Dendritic cell treated with granulocyte-macrophage colony-stimulating factor and Interleukin-4, amounts not matched to agents 40 ng/mL and 50 ng/mL, for 4 days (primary cell): ENCODE measurements at regions of chr13 and their contacts with region 1.

Region 1: DNA sequence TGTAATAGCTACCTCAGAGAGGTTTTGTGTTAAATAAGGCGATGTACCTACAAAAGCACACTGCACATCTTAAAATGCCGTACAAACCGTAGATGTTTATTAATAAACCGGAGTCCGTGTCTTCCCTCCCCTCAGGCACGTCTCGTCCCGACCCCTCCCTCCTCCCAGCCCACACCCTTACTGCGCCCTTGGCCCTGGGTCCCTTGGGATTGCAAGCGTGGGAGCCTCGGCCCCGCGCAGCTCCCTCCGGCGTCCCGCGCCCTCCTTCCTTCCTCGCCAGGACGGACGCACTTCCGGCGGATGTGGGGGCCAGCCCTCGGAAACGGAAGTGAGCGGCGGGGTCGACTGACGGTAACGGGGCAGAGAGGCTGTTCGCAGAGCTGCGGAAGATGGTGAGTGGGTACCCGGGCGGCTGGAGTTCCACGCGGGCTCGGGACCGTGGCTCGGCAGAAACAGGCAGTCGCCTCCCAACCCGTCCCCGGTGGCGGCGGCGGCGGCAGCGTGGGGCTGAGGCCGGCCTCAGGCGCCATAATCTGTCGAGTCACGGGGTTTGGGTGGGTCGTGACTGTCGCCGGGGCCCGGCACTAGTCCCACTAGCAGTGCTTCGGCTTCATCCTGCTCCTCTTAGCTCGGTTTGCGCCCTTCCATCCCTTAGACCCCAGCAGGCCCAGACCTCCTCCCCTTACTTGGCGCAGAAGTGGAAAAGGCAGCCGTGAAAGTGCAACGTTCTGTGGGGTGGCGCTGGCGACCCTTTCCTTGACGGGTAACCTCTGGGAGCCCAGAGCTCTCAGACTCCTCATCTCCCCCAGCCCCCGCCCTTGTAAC is at the start of gene POMP:
- H3K4me3 Mint-ChIP-seq: peak within 1 kb of the TSS; percentile 91
- H3K27ac Mint-ChIP-seq: peak within 1 kb of the TSS; percentile 89
- H3K4me1 Mint-ChIP-seq: peaks cover 60% of the 10 kb centered on the region
- H3K27me3 Mint-ChIP-seq: no peaks in the 10 kb centered on the region

Region 2: DNA sequence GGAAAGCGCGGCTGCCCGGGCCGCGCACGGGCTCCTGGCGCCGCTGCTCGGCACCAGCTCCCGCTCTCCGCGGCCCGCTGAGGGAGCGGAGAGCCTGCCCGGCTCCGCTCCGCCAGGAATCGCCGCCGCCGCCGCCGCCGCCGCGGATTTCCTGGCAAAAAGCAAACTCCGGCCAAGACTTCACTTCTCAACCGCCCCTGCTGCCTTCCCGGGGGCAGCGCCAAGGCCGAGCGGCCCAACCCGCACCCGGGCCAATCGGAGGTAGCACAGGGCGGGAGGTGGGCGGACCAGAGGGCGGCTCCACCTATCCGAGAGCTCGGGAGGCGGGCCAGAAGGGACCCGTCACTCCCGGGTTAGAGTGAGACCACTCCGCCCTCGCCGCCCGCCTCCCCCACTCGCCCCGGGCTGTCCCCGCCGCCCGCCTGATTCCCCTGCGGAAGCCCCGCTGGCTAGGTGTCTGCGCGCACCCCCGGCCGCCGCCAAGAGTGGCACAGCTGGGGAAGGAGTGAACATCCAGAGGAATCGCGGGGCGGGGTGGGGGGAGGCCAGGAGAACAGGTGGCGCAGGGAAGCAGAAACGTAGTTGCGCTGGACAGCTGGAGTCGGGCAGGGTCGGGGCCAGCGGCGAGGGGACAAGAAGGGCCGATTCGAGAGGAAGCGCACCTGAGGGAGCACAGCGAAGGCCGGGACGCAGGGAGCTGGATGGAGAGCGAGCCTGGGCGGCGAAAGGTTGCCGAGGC is 1038.5 kb before region 1 on chr13 and contains the start of gene LNX2:
- intact Hi-C with region 1: loop called (anchors 5 kb)
- H3K4me3 Mint-ChIP-seq: peak within 1 kb of the TSS; percentile 86
- H3K27ac Mint-ChIP-seq: peak within 1 kb of the TSS; percentile 87
- H3K4me1 Mint-ChIP-seq: peaks cover 65% of the 10 kb centered on the region
- H3K27me3 Mint-ChIP-seq: no peaks in the 10 kb centered on the region

Region 3: DNA sequence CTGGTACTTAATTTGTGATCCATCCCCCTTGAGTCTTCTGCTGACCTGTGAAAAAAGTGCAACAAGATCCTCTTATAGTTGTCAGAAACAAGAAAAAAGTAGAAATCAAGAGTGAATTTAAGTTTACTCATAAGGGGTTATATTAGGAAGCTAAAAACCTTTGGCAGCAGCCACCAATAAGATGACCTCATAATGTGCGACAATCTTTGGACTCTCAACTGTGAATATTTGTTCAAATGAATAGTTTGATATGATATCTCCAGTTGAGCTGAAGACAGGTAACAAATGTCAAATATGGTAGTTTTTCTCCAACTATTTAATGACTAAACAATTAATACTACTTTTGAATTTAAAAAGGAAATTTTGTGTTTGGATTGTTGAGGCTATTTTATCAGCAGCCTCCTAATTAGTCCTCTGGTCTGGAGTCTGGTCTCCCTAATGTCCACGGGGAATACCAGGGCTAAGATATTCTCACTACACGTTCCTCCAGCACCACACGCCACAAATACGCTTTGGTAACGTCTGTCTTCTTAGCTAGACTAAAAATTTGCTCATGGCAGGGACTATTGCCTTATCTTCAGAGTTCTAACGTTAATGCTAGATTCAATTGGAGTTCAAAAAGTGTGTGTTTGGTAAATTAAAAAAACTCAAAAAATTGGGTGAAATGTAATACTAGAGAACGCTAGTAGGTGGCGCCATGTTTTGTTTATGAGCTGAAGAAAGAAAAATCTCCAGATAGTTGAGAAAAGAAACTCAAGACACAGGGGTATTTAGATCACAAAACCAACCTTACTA is 790.2 kb before region 1 on chr13:
- intact Hi-C with region 1: no loop called
- H3K4me3 Mint-ChIP-seq: no peak overlapping the region
- H3K27ac Mint-ChIP-seq: no peak overlapping the region
- H3K4me1 Mint-ChIP-seq: no peaks in the 10 kb centered on the region
- H3K27me3 Mint-ChIP-seq: peaks cover 34% of the 10 kb centered on the region

Region 4: DNA sequence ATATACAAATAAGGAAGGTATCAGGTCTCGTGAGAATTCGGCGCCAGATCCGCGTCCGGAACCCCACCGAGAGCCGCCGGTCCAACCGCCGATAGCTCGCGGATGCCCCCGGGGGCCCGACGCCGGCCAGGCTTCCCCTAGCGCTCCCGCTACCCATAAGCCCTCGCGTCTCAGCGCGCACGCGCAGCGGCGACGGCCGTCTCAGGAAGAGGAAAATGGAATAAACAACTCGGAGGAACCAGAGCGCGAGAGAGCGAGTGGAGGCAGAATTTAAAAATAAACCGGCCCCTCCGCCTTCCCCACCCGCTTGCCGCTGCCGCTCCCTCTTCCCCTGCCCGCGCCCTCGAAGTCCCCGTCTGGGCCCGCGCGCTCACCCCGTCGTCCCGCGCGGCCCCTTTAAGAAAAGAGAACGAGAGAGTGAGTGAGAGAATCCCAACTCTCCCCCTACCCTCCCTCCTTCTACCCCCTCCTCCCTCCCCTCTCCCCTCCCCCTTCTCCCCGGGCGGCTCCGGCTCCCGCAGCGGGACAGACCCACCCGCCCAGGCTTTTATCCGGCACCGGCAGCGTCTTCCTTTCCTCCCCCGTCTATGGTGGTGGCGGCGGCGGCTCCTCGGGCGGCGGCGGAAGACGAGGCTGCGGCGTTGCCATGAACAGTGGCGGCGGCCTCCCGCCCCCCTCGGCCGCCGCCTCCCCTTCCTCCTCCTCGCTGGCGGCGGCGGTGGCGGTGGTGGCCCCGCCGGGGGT is 520.8 kb before region 1 on chr13 and contains the start of gene PAN3:
- intact Hi-C with region 1: loop called (anchors 5 kb)
- H3K4me3 Mint-ChIP-seq: peak within 1 kb of the TSS; percentile 83
- H3K27ac Mint-ChIP-seq: peak within 1 kb of the TSS; percentile 99
- H3K4me1 Mint-ChIP-seq: peaks cover 58% of the 10 kb centered on the region
- H3K27me3 Mint-ChIP-seq: no peaks in the 10 kb centered on the region

Region 5: GRCh38 chr13:28707629-28708427 is 48.8 kb after region 1 on chr13:
- intact Hi-C with region 1: loop called (anchors 5 kb)
- H3K4me3 Mint-ChIP-seq: peak overlapping the region; percentile 26
- H3K27ac Mint-ChIP-seq: peak overlapping the region; percentile 86
- H3K4me1 Mint-ChIP-seq: peaks cover 70% of the 10 kb centered on the region
- H3K27me3 Mint-ChIP-seq: no peaks in the 10 kb centered on the region